GM23248 (cell line): ENCODE measurements at regions of chr17 and their contacts with region 1.

Region 1: DNA sequence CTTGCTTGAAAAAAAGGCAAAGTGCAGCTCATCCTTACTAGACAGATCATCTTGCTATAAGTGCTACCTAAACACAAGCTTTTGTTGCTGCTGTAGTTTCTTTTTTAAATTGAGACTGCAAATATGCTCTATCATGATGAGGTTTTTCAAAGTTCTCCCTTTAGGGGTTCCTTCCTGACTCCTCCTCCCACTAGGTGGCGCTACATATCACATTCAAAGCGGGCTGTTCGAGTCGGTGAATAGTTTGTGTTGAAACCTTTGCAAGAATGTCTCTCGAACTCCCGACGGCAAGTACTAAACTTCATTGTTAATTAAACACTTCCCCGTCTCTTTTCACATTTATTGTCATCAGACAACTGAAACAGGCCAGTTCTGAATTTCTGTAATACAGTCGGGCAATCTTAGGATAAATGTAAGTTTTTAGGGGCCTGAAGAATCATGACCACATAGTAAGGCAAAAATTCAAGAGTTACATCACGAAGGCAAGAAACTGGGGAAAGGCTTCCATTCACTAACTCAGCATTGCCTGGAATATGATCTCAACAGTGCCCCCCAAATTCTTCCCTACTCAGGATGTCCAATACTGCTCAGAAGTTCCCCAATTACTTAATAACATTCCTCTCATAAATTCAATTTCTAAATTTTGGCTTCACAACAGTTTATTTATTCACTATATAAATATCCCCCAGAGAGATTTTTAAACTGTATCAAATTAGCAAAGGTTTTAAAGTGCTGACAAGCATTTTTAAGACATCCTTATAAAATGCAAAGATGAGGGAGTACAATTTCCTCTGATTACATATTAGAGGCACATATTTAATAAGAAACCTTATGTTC is 6.7 kb downstream of the HS3ST3A1 start:
- DNase-seq: peak; percentile 88
- H3K4me3 ChIP-seq: peak overlapping the region; percentile 54
- H3K27ac ChIP-seq: peak overlapping the region; percentile 74
- H3K4me1 ChIP-seq: peaks cover 55% of the 10 kb centered on the region
- H3K27me3 ChIP-seq: no peaks in the 10 kb centered on the region

Region 2: DNA sequence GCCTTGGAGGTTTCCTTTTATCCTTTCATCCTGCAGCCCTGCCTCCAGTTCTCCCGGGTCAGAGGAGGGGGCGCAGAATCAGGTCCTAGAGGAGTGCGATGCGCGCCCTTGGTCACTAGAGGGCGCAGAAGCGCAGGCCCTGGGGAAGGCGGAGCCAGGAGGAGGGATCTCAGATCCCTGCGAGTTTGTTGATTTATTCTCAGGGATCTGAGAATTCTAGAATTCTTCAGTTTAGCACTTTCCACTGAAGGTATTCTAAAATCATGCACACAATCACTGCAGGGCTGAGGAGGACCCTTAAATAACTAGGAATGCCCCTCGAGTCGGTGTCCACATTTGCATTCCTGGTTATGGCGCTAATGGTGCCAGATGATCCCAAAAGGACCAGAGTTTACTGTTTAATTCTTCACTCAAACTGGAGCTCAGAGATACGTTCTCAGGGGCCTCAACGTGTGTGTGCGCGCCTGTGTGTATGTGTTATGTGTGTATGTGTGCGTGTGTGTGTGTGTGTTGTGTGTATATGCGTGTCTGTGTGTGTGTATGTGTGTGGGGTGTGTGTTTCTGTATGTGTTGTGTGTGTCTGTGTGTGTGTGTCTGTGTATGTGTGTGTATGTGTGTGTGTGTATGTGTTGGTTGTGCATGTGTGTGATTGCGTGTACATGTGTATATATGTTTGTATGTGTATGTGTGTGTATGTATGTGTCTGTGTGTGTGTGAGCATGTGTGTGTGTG is 570.3 kb before region 1 on chr17:
- in situ Hi-C with region 1: loop called (anchors 25 kb)
- DNase-seq: peak; percentile 74
- H3K4me3 ChIP-seq: peak overlapping the region; percentile 53
- H3K27ac ChIP-seq: no peak overlapping the region
- H3K4me1 ChIP-seq: no peaks in the 10 kb centered on the region
- H3K27me3 ChIP-seq: no peaks in the 10 kb centered on the region

Region 3: GRCh38 chr17:13171790-13172189 is 423.2 kb before region 1 on chr17:
- in situ Hi-C with region 1: no loop called
- DNase-seq: no peak
- H3K4me3 ChIP-seq: no peak overlapping the region
- H3K27ac ChIP-seq: no peak overlapping the region
- H3K4me1 ChIP-seq: no peaks in the 10 kb centered on the region
- H3K27me3 ChIP-seq: 0 out of 2 replicates have a peak, but pooled peaks cover 3% of the 10 kb centered on the region

Region 4: GRCh38 chr17:13337864-13338371 is 257.1 kb before region 1 on chr17:
- in situ Hi-C with region 1: loop called (anchors 25 kb)
- DNase-seq: peak; percentile 84
- H3K4me3 ChIP-seq: peak overlapping the region; percentile 75
- H3K27ac ChIP-seq: peak overlapping the region; percentile 53
- H3K4me1 ChIP-seq: peaks cover 23% of the 10 kb centered on the region
- H3K27me3 ChIP-seq: no peaks in the 10 kb centered on the region

Region 5: DNA sequence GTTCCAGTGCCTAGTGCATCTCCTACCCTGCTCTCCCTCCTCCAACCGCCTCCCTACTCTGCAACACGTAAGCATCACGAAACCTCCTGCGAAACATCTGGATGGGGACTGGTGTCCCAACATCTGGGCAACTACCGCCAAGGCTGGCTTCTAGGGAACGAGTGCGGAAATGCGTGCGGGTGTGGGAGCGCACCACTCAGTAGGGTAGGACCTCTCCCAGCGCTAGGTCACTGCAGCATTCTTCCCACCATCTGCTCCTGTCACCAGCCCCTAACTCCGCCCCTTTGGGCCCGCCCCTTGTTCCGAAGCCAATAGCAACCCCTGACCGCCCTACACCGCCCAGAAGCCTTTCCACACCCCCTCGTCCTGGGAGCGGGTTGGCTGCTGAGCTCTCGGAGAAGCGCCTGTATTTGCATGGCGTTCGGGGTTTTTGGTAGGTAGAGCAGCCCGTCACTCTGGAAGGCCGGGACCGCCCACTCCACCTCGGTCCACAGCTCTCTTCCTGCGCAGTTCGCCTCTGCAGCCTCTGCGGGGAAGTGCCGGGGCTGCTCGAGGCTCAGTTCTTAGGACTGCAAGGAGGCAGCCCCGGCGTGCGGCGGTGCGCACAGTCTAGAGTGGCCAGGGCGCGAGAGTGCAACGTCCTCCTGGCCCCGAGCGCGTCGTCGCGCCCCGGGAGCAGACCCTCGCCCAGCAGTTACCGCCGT is 705.7 kb after region 1 on chr17 and contains the start of gene HS3ST3B1:
- in situ Hi-C with region 1: loop called (anchors 10 kb)
- DNase-seq: peak; percentile 99
- H3K4me3 ChIP-seq: peak within 1 kb of the TSS; percentile 91
- H3K27ac ChIP-seq: peak within 1 kb of the TSS; percentile 86
- H3K4me1 ChIP-seq: peaks cover 30% of the 10 kb centered on the region
- H3K27me3 ChIP-seq: no peaks in the 10 kb centered on the region
- total RNA-seq, gene HS3ST3B1: 41.9 and 45.5 TPM in 2 replicates